ENCODE measurements at regions of chr11 and their contacts with region 1.

Region 1: GRCh38 chr11:17770048-17770652 is 35.6 kb downstream of the KCNC1 start:
- DNase-seq: peak; percentile 49
- ATAC-seq: peak; percentile 29
- H3K4me3 Mint-ChIP-seq: no peak overlapping the region
- H3K27ac Mint-ChIP-seq: peak overlapping the region; percentile 38; the same call in 1 of the 2 replicates
- H3K4me1 Mint-ChIP-seq: peaks cover 4% of the 10 kb centered on the region; the same call in 1 of the 2 replicates
- H3K27me3 Mint-ChIP-seq: no peaks in the 10 kb centered on the region
- CTCF ChIP-seq: no peak

Region 2: GRCh38 chr11:17613428-17613962 is 156.7 kb before region 1 on chr11:
- CTCF ChIA-PET with region 1: no interaction called
- POLR2A ChIA-PET with region 1: no interaction called
- DNase-seq: no peak
- ATAC-seq: no peak
- H3K4me3 Mint-ChIP-seq: no peak overlapping the region
- H3K27ac Mint-ChIP-seq: no peak overlapping the region
- H3K4me1 Mint-ChIP-seq: peaks cover 6% of the 10 kb centered on the region; the same call in 1 of the 2 replicates
- H3K27me3 Mint-ChIP-seq: peaks cover 6% of the 10 kb centered on the region
- CTCF ChIP-seq: no peak

Region 3: DNA sequence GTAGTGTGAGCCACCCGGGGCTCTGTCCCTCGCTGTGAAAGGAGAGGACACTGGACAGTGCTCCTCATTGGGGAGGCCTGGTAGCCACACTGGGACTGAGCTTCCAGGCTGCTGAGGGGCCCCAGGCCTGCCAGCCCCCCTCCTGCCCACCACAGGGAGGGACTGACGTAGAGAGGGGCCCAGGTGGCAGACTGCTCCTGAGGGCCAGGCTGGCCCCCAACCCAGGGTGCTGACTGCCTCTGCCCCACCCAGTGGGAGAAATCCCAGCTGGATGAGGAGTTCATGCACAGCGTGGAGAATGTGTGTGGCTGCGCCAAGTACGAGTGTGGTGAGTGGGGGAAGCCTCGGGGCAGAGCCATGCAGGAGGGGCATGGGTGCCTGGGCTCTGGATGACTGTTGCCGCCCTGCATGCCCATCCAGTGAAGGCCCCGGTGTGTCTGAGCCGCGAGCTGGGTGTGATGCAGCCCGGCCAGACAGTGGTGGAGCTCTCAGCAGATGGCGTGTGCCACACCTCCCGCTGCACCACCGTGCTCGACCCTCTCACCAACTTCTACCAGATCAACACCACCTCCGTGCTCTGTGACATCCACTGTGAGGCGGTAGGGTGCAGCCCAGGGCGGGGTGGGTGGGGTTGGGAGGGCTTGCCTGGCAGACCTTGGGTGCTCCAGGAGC is 129.5 kb before region 1 on chr11:
- CTCF ChIA-PET with region 1: no interaction called
- POLR2A ChIA-PET with region 1: no interaction called
- DNase-seq: no peak
- ATAC-seq: no peak
- H3K4me3 Mint-ChIP-seq: no peak overlapping the region
- H3K27ac Mint-ChIP-seq: no peak overlapping the region
- H3K4me1 Mint-ChIP-seq: no peaks in the 10 kb centered on the region; the same call in 1 of the 2 replicates
- H3K27me3 Mint-ChIP-seq: no peaks in the 10 kb centered on the region; the same call in none of the 2 replicates
- CTCF ChIP-seq: no peak

Region 4: GRCh38 chr11:17743808-17744119 is 26.4 kb before region 1 on chr11:
- CTCF ChIA-PET with region 1: interaction called, 14 read pairs
- POLR2A ChIA-PET with region 1: no interaction called
- DNase-seq: no peak
- ATAC-seq: no peak
- H3K4me3 Mint-ChIP-seq: no peak overlapping the region
- H3K27ac Mint-ChIP-seq: no peak overlapping the region
- H3K4me1 Mint-ChIP-seq: no peaks in the 10 kb centered on the region
- H3K27me3 Mint-ChIP-seq: no peaks in the 10 kb centered on the region; the same call in 1 of the 2 replicates
- CTCF ChIP-seq: no peak

Region 5: DNA sequence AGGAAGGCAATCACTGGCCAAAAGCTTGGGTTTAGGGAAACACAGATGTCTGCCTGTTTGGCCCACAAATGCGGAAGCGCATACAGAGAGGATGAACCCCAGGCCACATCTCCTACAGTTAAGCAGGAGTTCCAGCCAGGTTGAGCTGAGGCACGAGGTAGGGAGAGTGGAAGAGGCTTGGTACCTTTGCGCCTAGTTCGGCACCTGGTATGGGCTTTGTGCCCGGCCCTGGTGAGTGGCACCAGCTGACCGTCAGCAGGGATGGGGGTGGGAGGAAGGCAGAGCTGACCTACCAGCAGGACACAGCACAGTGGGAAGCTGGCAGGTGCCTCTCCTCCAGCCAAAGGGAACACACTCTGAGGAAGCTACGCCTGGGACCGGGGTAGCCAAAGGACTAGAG is 22.0 kb after region 1 on chr11:
- CTCF ChIA-PET with region 1: interaction called, 10 read pairs
- POLR2A ChIA-PET with region 1: interaction called, 3 read pairs
- DNase-seq: no peak
- ATAC-seq: no peak
- H3K4me3 Mint-ChIP-seq: no peak overlapping the region
- H3K27ac Mint-ChIP-seq: no peak overlapping the region
- H3K4me1 Mint-ChIP-seq: no peaks in the 10 kb centered on the region
- H3K27me3 Mint-ChIP-seq: no peaks in the 10 kb centered on the region
- CTCF ChIP-seq: no peak

Region 6: DNA sequence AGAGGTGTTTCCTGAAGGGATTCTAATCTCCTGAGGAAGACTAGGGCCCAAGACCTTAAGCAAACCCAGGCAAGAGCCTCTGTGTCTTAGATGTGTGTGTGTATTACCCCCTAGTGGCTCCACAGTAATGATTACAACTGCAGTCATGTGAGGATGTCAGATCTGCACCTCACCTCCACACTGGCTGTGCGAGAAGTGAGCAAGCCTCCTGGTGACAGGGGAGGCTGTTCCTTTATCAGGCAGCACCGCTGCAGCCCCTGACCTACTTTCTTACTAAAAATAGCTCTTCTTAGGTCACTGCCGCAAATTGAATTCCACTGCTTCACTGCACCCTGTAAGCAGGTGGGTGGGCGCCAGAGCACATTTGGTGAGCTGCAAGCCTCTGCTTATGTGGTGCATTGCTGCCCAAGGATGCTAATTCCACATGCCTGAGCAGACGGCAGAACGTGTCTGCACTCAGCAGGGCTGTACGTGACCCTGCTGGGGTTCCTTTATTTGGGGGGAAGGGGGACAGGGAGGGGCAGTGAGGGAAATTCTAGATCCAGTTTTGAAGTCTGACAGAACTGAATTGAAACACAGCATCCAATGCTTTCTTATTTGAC is 76.8 kb after region 1 on chr11:
- CTCF ChIA-PET with region 1: interaction called, 29 read pairs
- POLR2A ChIA-PET with region 1: no interaction called
- DNase-seq: peak; percentile 14
- ATAC-seq: peak; percentile 74
- H3K4me3 Mint-ChIP-seq: no peak overlapping the region
- H3K27ac Mint-ChIP-seq: no peak overlapping the region
- H3K4me1 Mint-ChIP-seq: no peaks in the 10 kb centered on the region; the same call in 1 of the 2 replicates
- H3K27me3 Mint-ChIP-seq: no peaks in the 10 kb centered on the region
- CTCF ChIP-seq: no peak

Region 7: GRCh38 chr11:17890325-17890724 is 120.2 kb after region 1 on chr11:
- CTCF ChIA-PET with region 1: interaction called, 11 read pairs
- POLR2A ChIA-PET with region 1: no interaction called
- DNase-seq: no peak
- ATAC-seq: peak; percentile 34; the same call in 1 of the 2 replicates
- H3K4me3 Mint-ChIP-seq: no peak overlapping the region
- H3K27ac Mint-ChIP-seq: no peak overlapping the region
- H3K4me1 Mint-ChIP-seq: peaks cover 17% of the 10 kb centered on the region
- H3K27me3 Mint-ChIP-seq: no peaks in the 10 kb centered on the region
- CTCF ChIP-seq: no peak

Region 8: GRCh38 chr11:17927681-17928347 is 157.7 kb after region 1 on chr11:
- CTCF ChIA-PET with region 1: interaction called, 21 read pairs
- POLR2A ChIA-PET with region 1: no interaction called
- DNase-seq: no peak
- ATAC-seq: no peak
- H3K4me3 Mint-ChIP-seq: no peak overlapping the region
- H3K27ac Mint-ChIP-seq: peak overlapping the region; percentile 30; the same call in 1 of the 2 replicates
- H3K4me1 Mint-ChIP-seq: peaks cover 28% of the 10 kb centered on the region
- H3K27me3 Mint-ChIP-seq: no peaks in the 10 kb centered on the region
- CTCF ChIP-seq: no peak

Region 9: DNA sequence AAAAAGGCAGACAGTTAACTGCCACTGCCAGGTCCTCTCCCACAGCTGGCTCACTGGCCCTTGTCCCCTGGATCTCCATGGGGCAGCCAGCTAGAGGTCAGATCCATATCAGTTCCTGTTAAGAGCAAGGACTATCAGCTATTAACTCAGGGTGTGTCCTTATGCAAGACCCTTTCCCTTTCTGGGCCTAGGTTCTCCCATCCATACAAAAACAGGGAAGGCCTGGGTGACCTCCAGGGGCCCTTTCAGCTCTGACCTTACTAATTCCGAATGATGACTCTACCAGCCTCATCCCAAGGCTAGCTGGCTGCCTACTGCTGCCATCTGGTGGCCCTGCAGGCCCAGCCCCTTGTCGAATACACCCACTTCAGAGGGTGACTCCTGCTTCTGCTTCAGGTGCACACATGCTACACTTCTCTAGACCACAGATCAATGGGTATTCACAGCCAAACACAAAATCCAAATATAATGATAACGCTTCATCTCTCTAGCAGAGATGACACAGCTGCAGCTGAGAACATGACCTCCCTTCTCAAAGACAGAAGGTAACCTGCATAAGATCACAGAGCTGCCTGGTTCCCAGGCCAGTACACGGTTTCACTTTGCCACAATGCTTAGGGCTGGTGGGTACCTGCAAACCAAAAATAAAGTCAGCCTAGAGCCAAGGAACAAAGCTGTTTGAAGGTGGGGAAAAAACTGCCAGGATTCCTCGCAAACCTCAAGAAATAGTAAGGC is 208.6 kb after region 1 on chr11:
- CTCF ChIA-PET with region 1: interaction called, 70 read pairs
- POLR2A ChIA-PET with region 1: no interaction called
- DNase-seq: peak; percentile 73
- ATAC-seq: peak; percentile 97
- H3K4me3 Mint-ChIP-seq: no peak overlapping the region
- H3K27ac Mint-ChIP-seq: 0 out of 2 replicates have a peak overlapping the region, but pooled peaks have one; percentile 86
- H3K4me1 Mint-ChIP-seq: no peaks in the 10 kb centered on the region
- H3K27me3 Mint-ChIP-seq: no peaks in the 10 kb centered on the region
- CTCF ChIP-seq: no peak; the same call in 1 of the 2 replicates

Measured in WTC11 (cell line).